ENCODE measurements at regions of chr12 and their contacts with region 1.

Region 1: GRCh38 chr12:74945771-74946198 is 263.9 kb downstream of the KCNC2 start:
- DNase-seq: peak in 4 of 5 donors; percentile 46 to 58 (median 54)
- H3K4me3 ChIP-seq: no peak overlapping the region
- H3K4me3 Mint-ChIP-seq: peak overlapping the region; percentile 41 to 82 (median 70)
- H3K27ac ChIP-seq: no peak overlapping the region
- H3K27ac Mint-ChIP-seq: peak overlapping the region in 6 of 7 donors; percentile 23 to 85 (median 50)
- H3K4me1 ChIP-seq: peaks cover 25% of the 10 kb centered on the region
- H3K4me1 Mint-ChIP-seq: peaks cover 15 to 21% (median 19%) of the 10 kb centered on the region in 4 donors
- H3K27me3 ChIP-seq: no peaks in the 10 kb centered on the region
- H3K27me3 Mint-ChIP-seq: no peaks in the 10 kb centered on the region

Region 2: GRCh38 chr12:74890237-74890599 is 55.6 kb before region 1 on chr12:
- CTCF ChIA-PET with region 1: no interaction called
- POLR2A ChIA-PET with region 1: interaction called, 3 read pairs
- intact Hi-C with region 1: loop called (anchors 5 kb)
- DNase-seq: peak in 1 of 5 donors; percentile 35
- H3K4me3 ChIP-seq: no peak overlapping the region
- H3K4me3 Mint-ChIP-seq: peak overlapping the region in 5 of 8 donors; percentile 6 to 45 (median 35)
- H3K27ac ChIP-seq: no peak overlapping the region
- H3K27ac Mint-ChIP-seq: peak overlapping the region in 4 of 7 donors; percentile 0 to 63 (median 62)
- H3K4me1 ChIP-seq: peaks cover 44% of the 10 kb centered on the region
- H3K4me1 Mint-ChIP-seq: peaks cover 17 to 48% (median 29%) of the 10 kb centered on the region in 4 donors
- H3K27me3 ChIP-seq: no peaks in the 10 kb centered on the region
- H3K27me3 Mint-ChIP-seq: no peaks in the 10 kb centered on the region

Region 3: DNA sequence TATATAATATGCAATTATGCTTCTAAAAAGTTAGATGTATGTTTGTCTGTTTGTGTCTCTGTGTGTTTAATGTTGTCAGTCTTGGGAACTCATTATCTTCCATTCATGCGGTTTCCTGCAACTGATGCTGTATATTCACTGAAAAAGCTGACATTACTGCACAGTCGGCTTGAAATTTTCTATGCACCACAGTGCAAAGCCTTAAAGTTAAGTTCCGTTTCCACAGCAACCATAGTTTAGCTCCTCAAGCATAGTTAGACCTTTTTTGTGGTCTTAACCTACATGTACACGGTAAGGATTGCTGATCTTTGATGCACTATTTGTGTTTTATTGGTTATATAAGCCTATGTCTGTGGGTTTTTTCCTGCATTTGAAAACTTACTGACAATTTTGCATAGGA is 45.6 kb before region 1 on chr12:
- CTCF ChIA-PET with region 1: no interaction called
- POLR2A ChIA-PET with region 1: no interaction called
- intact Hi-C with region 1: loop called (anchors 2 kb)
- DNase-seq: peak; percentile 44 to 65 (median 63)
- H3K4me3 ChIP-seq: no peak overlapping the region
- H3K4me3 Mint-ChIP-seq: peak overlapping the region in 6 of 8 donors; percentile 0 to 60 (median 28)
- H3K27ac ChIP-seq: no peak overlapping the region
- H3K27ac Mint-ChIP-seq: peak overlapping the region; percentile 15 to 84 (median 76)
- H3K4me1 ChIP-seq: peaks cover 42% of the 10 kb centered on the region
- H3K4me1 Mint-ChIP-seq: peaks cover 20 to 40% (median 33%) of the 10 kb centered on the region in 4 donors
- H3K27me3 ChIP-seq: no peaks in the 10 kb centered on the region
- H3K27me3 Mint-ChIP-seq: no peaks in the 10 kb centered on the region

Region 4: DNA sequence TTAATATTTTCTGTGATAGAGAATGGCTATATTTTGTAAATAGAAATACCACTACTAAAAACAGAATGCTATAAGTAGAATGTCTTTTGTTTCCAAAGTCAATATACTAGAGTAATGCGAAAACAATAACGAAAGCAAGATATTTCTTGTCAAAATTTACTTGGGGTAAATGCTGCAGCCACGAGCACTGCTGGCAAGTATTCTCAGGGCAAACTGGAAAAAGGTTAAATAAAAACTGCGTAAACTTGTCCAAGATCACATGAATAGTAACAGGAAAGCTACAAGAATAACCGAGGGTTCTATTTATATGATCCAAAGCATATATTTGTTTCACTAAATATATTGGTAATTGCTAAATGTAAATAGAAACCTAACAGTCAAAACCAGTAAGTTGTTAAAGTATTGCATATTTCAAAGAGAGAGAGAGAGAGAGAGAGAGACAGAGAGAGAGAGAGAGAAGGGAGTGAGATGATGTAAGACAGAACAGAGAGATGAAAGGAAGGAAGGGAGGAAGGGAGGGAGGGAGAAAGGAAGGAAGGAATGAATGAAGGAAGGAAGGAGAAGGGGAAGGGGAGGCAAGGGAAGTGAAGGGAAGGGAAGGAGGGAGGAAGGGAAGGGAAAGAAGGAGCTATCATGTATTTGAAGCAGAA is 32.2 kb after region 1 on chr12:
- CTCF ChIA-PET with region 1: no interaction called
- POLR2A ChIA-PET with region 1: no interaction called
- intact Hi-C with region 1: no loop called
- DNase-seq: no peak
- H3K4me3 ChIP-seq: no peak overlapping the region
- H3K4me3 Mint-ChIP-seq: no peak overlapping the region
- H3K27ac ChIP-seq: no peak overlapping the region
- H3K27ac Mint-ChIP-seq: peak overlapping the region in 1 of 7 donors; percentile 26
- H3K4me1 ChIP-seq: no peaks in the 10 kb centered on the region
- H3K4me1 Mint-ChIP-seq: peaks cover 0 to 1% (median under 1%) of the 10 kb centered on the region in 4 donors
- H3K27me3 ChIP-seq: no peaks in the 10 kb centered on the region
- H3K27me3 Mint-ChIP-seq: no peaks in the 10 kb centered on the region

Region 5: GRCh38 chr12:74999474-74999873 is 53.7 kb after region 1 on chr12:
- CTCF ChIA-PET with region 1: no interaction called
- POLR2A ChIA-PET with region 1: no interaction called
- intact Hi-C with region 1: loop called (anchors 1 kb)
- DNase-seq: peak in 3 of 5 donors; percentile 6
- H3K4me3 ChIP-seq: peak overlapping the region in 1 of 2 donors; percentile 37
- H3K4me3 Mint-ChIP-seq: peak overlapping the region; percentile 66 to 90 (median 78)
- H3K27ac ChIP-seq: peak overlapping the region; percentile 9
- H3K27ac Mint-ChIP-seq: peak overlapping the region in 5 of 7 donors; percentile 11 to 83 (median 72)
- H3K4me1 ChIP-seq: peaks cover 9% of the 10 kb centered on the region
- H3K4me1 Mint-ChIP-seq: peaks cover 8 to 15% (median 9%) of the 10 kb centered on the region in 4 donors
- H3K27me3 ChIP-seq: no peaks in the 10 kb centered on the region
- H3K27me3 Mint-ChIP-seq: no peaks in the 10 kb centered on the region

Region 6: GRCh38 chr12:75747572-75748021 is 801.8 kb after region 1 on chr12:
- CTCF ChIA-PET with region 1: no interaction called
- POLR2A ChIA-PET with region 1: no interaction called
- intact Hi-C with region 1: no loop called
- DNase-seq: no peak
- H3K4me3 ChIP-seq: no peak overlapping the region
- H3K4me3 Mint-ChIP-seq: no peak overlapping the region
- H3K27ac ChIP-seq: no peak overlapping the region
- H3K27ac Mint-ChIP-seq: no peak overlapping the region
- H3K4me1 ChIP-seq: no peaks in the 10 kb centered on the region
- H3K4me1 Mint-ChIP-seq: no peaks in the 10 kb centered on the region
- H3K27me3 ChIP-seq: no peaks in the 10 kb centered on the region
- H3K27me3 Mint-ChIP-seq: peaks cover 3 to 4% of the 10 kb centered on the region in 2 donors